MCF 10A (cell line): ENCODE measurements at regions of chr5 and their contacts with region 1.

Region 1: GRCh38 chr5:59039296-59040023 is 456.6 kb downstream of the RAB3C start:
- DNase-seq: peak; percentile 89
- H3K4me3 Mint-ChIP-seq: peak overlapping the region; percentile 84
- H3K27ac Mint-ChIP-seq: peak overlapping the region; percentile 92
- H3K4me1 Mint-ChIP-seq: peaks cover 36% of the 10 kb centered on the region
- H3K27me3 Mint-ChIP-seq: no peaks in the 10 kb centered on the region
- CTCF ChIP-seq: no peak

Region 2: GRCh38 chr5:58983526-58984452 is 55.7 kb before region 1 on chr5:
- CTCF ChIA-PET with region 1: interaction called, 3 read pairs
- POLR2A ChIA-PET with region 1: interaction called, 10 read pairs
- intact Hi-C with region 1: no loop called
- DNase-seq: no peak
- H3K4me3 Mint-ChIP-seq: no peak overlapping the region
- H3K27ac Mint-ChIP-seq: no peak overlapping the region
- H3K4me1 Mint-ChIP-seq: peaks cover 15% of the 10 kb centered on the region
- H3K27me3 Mint-ChIP-seq: no peaks in the 10 kb centered on the region
- CTCF ChIP-seq: no peak

Region 3: DNA sequence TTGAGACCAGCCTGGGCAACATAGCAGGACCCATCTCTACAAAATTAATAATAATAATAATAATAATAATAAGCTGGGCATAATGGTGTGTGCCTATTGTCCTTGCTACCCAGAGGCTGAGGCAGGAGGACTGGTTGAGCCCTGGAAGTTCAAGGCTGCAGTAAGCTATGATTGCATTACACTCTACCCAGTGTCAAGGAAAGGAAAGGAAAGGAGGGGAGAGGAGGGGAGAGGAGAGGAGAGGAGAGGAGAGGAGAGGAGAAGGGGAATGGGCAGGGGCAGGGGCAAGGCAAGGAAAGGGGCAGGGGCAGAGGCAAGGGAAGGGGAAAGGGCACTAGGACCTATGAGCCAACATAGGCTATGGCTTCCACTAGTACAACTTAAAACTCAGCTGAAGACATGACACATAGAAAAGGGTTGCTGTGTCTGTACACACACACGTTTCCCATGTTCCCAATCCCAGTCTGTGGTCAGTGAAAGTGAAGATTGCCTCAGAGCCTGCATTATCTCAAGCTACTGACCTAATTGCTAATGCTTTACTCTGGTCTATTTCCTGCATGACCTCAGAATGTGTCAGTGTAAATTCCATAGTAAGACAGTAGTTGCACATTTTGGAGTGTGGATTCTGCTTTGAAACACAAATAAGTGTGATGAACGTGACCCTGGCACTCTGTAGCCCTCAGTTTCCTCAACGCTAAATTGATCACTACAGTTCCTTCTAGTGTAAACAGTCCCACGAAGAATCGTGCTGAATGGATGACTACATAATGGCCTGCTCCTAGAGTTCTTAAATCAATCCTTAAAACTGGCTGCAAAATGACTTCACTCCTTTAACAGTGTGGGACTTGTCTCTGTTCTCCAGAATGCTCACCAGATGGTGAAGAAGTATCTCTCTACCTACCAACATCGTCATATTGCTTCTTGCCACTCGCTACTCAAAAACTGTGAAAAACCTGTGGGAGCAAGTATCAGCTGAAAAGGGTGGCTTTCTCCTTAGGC is 40.5 kb after region 1 on chr5:
- CTCF ChIA-PET with region 1: interaction called, 5 read pairs
- POLR2A ChIA-PET with region 1: interaction called, 3 read pairs
- intact Hi-C with region 1: loop called (anchors 5 kb)
- DNase-seq: peak; percentile 86
- H3K4me3 Mint-ChIP-seq: no peak overlapping the region
- H3K27ac Mint-ChIP-seq: peak overlapping the region; percentile 92
- H3K4me1 Mint-ChIP-seq: peaks cover 9% of the 10 kb centered on the region
- H3K27me3 Mint-ChIP-seq: no peaks in the 10 kb centered on the region
- CTCF ChIP-seq: no peak

Region 4: GRCh38 chr5:59099270-59099994 is 60.0 kb after region 1 on chr5:
- CTCF ChIA-PET with region 1: interaction called, 7 read pairs
- POLR2A ChIA-PET with region 1: interaction called, 9 read pairs
- intact Hi-C with region 1: loop called (anchors 5 kb)
- DNase-seq: peak; percentile 78
- H3K4me3 Mint-ChIP-seq: no peak overlapping the region
- H3K27ac Mint-ChIP-seq: peak overlapping the region; percentile 68
- H3K4me1 Mint-ChIP-seq: peaks cover 36% of the 10 kb centered on the region
- H3K27me3 Mint-ChIP-seq: no peaks in the 10 kb centered on the region
- CTCF ChIP-seq: no peak

Region 5: GRCh38 chr5:59126708-59127573 is 87.5 kb after region 1 on chr5:
- CTCF ChIA-PET with region 1: interaction called, 8 read pairs
- POLR2A ChIA-PET with region 1: interaction called, 9 read pairs
- intact Hi-C with region 1: loop called (anchors 2 kb)
- DNase-seq: peak; percentile 26
- H3K4me3 Mint-ChIP-seq: no peak overlapping the region
- H3K27ac Mint-ChIP-seq: no peak overlapping the region
- H3K4me1 Mint-ChIP-seq: no peaks in the 10 kb centered on the region
- H3K27me3 Mint-ChIP-seq: no peaks in the 10 kb centered on the region
- CTCF ChIP-seq: no peak

Region 6: DNA sequence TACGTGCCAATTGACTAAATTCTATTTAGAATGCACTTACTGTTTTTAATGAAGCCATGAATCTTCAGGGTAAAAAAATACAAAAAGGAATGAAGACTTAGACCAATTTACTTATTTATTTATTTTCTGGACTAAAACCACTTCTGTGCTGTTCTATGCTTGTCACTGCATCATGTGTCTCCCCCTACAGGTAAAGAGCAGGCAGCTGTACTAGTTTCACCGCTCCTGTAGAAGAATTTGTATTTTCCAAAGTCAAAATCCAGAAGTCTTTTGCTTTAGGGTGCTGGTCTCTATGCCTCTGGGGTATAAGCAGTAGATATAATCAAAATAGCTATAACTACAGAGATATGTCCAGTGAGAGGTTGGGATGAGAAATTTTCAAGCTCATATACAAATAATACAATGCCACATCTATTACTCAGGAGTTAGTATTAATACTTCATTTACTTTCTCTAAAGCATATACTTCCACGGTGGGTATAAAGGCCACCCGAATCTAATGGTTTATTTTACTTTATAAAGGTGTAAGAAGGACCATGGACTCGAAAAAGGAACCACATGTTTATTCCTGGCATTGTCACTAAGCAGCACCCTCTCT is 134.9 kb after region 1 on chr5:
- CTCF ChIA-PET with region 1: interaction called, 110 read pairs
- POLR2A ChIA-PET with region 1: interaction called, 7 read pairs
- intact Hi-C with region 1: loop called (anchors 1 kb)
- DNase-seq: peak; percentile 73
- H3K4me3 Mint-ChIP-seq: no peak overlapping the region
- H3K27ac Mint-ChIP-seq: no peak overlapping the region
- H3K4me1 Mint-ChIP-seq: peaks cover 7% of the 10 kb centered on the region
- H3K27me3 Mint-ChIP-seq: no peaks in the 10 kb centered on the region
- CTCF ChIP-seq: peak; percentile 89

Region 7: GRCh38 chr5:59367791-59368394 is 328.4 kb after region 1 on chr5:
- CTCF ChIA-PET with region 1: interaction called, 3 read pairs
- POLR2A ChIA-PET with region 1: no interaction called
- intact Hi-C with region 1: loop called (anchors 10 kb)
- DNase-seq: peak; percentile 77
- H3K4me3 Mint-ChIP-seq: no peak overlapping the region
- H3K27ac Mint-ChIP-seq: no peak overlapping the region
- H3K4me1 Mint-ChIP-seq: no peaks in the 10 kb centered on the region
- H3K27me3 Mint-ChIP-seq: no peaks in the 10 kb centered on the region
- CTCF ChIP-seq: peak; percentile 87